ENCODE measurements at regions of chr10 and their contacts with region 1.

Region 1: GRCh38 chr10:10818082-10818481 is 199.6 kb upstream of the CELF2 start:
- DNase-seq: no peak
- H3K4me3 ChIP-seq: no peak overlapping the region
- H3K27ac ChIP-seq: no peak overlapping the region
- H3K4me1 ChIP-seq: peaks cover 9% of the 10 kb centered on the region
- H3K27me3 ChIP-seq: no peaks in the 10 kb centered on the region
- CTCF ChIP-seq: no peak
- POLR2A ChIP-seq: no peak

Region 2: GRCh38 chr10:10235003-10235402 is 583.1 kb before region 1 on chr10:
- CTCF ChIA-PET with region 1: no interaction called
- POLR2A ChIA-PET with region 1: no interaction called
- dilution Hi-C with region 1: no loop called
- intact Hi-C with region 1: no loop called
- DNase-seq: no peak
- H3K4me3 ChIP-seq: no peak overlapping the region
- H3K27ac ChIP-seq: no peak overlapping the region
- H3K4me1 ChIP-seq: no peaks in the 10 kb centered on the region
- H3K27me3 ChIP-seq: no peaks in the 10 kb centered on the region
- CTCF ChIP-seq: no peak
- POLR2A ChIP-seq: no peak

Region 3: GRCh38 chr10:10804998-10805740 is 12.9 kb before region 1 on chr10:
- CTCF ChIA-PET with region 1: interaction called, 10 read pairs
- POLR2A ChIA-PET with region 1: no interaction called
- dilution Hi-C with region 1: no loop called
- intact Hi-C with region 1: loop called (anchors 2 kb)
- DNase-seq: peak; percentile 79
- H3K4me3 ChIP-seq: no peak overlapping the region
- H3K27ac ChIP-seq: peak overlapping the region; percentile 37
- H3K4me1 ChIP-seq: peaks cover 16% of the 10 kb centered on the region
- H3K27me3 ChIP-seq: no peaks in the 10 kb centered on the region
- CTCF ChIP-seq: no peak
- POLR2A ChIP-seq: no peak

Measured in endothelial cell of umbilical vein (primary cell).